Ascending aorta (tissue), 2 donors: ENCODE measurements at regions of chr7 and their contacts with region 1.

Region 1: DNA sequence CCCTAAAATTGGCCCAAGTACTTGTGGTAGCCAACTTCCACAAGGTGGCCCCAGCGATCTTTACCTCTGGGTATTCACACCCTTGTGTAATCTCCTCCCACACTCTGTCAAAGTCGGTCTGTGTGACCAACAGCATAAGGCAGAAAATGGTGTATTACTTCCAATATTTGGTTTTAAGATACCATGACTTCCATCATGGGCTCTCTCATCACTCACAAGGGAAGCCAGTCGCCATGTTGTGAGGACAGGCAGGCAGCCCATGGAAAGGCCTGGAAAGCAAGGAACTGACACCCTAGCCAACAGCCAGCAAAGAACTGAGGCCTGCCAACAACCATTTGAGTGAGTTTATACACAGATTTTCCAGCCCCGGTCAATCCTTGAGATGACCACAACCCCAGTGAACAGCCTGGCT is 91.0 kb upstream of the KMT2E start:
- DNase-seq: peak in 1 of 2 donors; percentile 89
- H3K4me3 ChIP-seq: no peak overlapping the region
- H3K27ac ChIP-seq: peak overlapping the region; percentile 62 to 70
- H3K4me1 ChIP-seq: peaks cover 0 to 9% of the 10 kb centered on the region in 2 donors
- H3K27me3 ChIP-seq: no peaks in the 10 kb centered on the region
- CTCF ChIP-seq: peak; percentile 54 to 75 (median 68)

Region 2: GRCh38 chr7:104231054-104232046 is 691.7 kb before region 1 on chr7:
- intact Hi-C with region 1: loop called (anchors 5 kb)
- DNase-seq: peak in 1 of 2 donors; percentile 67
- H3K4me3 ChIP-seq: no peak overlapping the region
- H3K27ac ChIP-seq: no peak overlapping the region
- H3K4me1 ChIP-seq: no peaks in the 10 kb centered on the region
- H3K27me3 ChIP-seq: no peaks in the 10 kb centered on the region
- CTCF ChIP-seq: peak; percentile 39 to 86 (median 81)

Region 3: GRCh38 chr7:104857458-104858425 is 65.3 kb before region 1 on chr7:
- intact Hi-C with region 1: no loop called
- DNase-seq: no peak
- H3K4me3 ChIP-seq: no peak overlapping the region
- H3K27ac ChIP-seq: no peak overlapping the region
- H3K4me1 ChIP-seq: no peaks in the 10 kb centered on the region
- H3K27me3 ChIP-seq: no peaks in the 10 kb centered on the region
- CTCF ChIP-seq: no peak

Region 4: DNA sequence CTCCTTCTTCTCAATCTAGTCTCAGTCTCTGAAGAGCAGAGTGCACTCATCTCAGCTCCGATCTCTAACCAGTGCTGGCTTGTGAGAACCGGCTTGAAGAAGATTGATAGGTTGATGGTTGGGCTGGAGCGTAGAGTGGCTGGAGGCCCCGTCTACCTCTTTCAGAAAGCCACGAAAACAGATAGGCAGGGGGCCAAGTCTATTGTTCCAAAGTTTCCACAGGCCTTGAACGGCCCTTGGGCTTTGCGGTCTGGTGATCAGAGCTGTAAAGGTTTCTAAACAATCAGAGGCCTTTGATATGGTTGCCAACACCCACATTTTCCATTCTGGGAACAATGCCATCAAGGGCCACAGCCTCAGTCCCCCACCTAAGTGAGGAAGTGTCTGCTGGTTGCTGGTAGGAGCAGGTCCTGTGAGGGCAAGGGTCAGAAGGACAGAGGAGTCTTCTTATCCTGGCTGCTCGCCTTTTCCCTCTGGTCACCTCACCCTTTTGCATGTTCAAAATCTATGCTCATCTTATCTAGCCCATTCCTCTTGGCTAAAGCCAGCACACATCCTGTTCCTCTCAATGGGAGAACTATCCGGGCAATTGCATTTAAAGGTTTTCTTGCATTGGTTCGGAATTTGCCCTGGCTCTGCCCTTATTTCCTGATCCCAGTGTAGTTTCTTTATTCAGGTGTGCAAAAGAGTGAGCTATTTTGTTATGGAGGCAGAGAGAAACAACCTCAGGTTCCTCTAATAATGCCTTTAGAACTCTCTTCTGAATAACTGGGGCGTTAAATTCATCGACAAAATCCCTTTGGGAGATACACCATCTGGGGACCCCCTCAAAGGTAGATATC is 20.7 kb after region 1 on chr7:
- intact Hi-C with region 1: loop called (anchors 2 kb)
- DNase-seq: peak in 1 of 2 donors; percentile 75
- H3K4me3 ChIP-seq: no peak overlapping the region
- H3K27ac ChIP-seq: peak overlapping the region; percentile 91 to 95
- H3K4me1 ChIP-seq: peaks cover 7 to 28% of the 10 kb centered on the region in 2 donors
- H3K27me3 ChIP-seq: no peaks in the 10 kb centered on the region
- CTCF ChIP-seq: no peak

Region 5: GRCh38 chr7:105012503-105013220 is 89.6 kb after region 1 on chr7:
- intact Hi-C with region 1: loop called (anchors 5 kb)
- DNase-seq: peak; percentile 98 to 100
- H3K4me3 ChIP-seq: peak overlapping the region; percentile 83 to 98
- H3K27ac ChIP-seq: peak overlapping the region; percentile 97 to 100
- H3K4me1 ChIP-seq: peaks cover 0 to 12% of the 10 kb centered on the region in 2 donors
- H3K27me3 ChIP-seq: no peaks in the 10 kb centered on the region
- CTCF ChIP-seq: no peak

Region 6: GRCh38 chr7:105067691-105068090 is 144.7 kb after region 1 on chr7:
- intact Hi-C with region 1: loop called (anchors 5 kb)
- DNase-seq: no peak
- H3K4me3 ChIP-seq: no peak overlapping the region
- H3K27ac ChIP-seq: no peak overlapping the region
- H3K4me1 ChIP-seq: no peaks in the 10 kb centered on the region
- H3K27me3 ChIP-seq: no peaks in the 10 kb centered on the region
- CTCF ChIP-seq: no peak

Region 7: DNA sequence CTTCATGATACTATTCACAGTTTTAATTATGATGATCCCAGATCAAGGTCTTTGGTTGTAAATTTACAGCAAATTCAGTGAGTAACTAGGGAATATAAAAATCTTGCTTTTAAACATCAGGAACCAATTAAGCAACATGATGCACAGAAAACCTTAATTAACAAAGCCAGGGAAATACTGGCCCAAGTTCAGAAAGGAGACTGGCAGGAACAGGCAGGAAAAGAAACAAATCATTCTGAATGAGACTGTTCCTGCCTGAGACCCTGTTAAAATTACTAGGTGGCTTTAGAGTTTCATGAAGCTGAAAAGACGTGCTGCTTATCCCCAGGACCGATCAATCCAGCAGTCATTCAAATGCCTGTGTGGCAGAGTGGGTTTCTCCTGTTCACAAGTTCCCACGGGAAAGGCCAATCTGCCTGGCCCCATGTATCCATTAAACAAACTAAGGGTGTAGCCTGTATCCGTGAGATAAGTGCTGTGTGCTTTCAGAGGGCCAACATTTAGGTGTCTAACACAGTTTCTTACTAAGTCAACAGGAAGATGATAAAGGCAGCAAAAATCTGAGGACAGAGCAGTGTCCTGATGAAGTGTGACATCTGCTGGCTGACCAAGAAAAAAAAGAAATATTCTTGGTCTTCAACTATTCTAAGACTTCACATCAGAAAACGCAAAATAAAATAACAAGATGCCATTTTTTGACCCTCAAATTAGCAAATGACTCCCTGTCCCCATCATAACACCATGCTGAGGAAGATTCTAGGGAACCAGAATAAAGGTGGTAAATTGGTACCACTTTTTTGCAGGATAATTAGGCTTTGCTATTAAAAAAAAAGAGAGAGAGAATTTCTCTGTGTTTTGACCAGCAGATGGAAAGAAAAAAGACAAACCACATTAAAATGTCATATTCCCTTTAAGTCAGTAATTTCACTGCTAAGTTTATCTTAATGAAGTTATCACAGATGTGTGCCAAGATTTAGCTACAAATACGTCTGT is 564.9 kb after region 1 on chr7:
- intact Hi-C with region 1: loop called (anchors 10 kb)
- DNase-seq: no peak
- H3K4me3 ChIP-seq: no peak overlapping the region
- H3K27ac ChIP-seq: no peak overlapping the region
- H3K4me1 ChIP-seq: no peaks in the 10 kb centered on the region
- H3K27me3 ChIP-seq: no peaks in the 10 kb centered on the region
- CTCF ChIP-seq: peak in 2 of 3 experiments; percentile 4 to 23